Motor neuron (in vitro differentiated cells): ENCODE measurements at regions of chr19 and their contacts with region 1.

Region 1: GRCh38 chr19:771332-771785 is 20.4 kb downstream of the MISP start:
- ATAC-seq: peak in 4 of 8 experiments; percentile 33 to 79 (median 72)
- H3K4me3 ChIP-seq: no peak overlapping the region
- H3K27ac ChIP-seq: no peak overlapping the region
- H3K4me1 ChIP-seq: peaks cover 0 to 3% of the 10 kb centered on the region in 2 donors

Region 2: DNA sequence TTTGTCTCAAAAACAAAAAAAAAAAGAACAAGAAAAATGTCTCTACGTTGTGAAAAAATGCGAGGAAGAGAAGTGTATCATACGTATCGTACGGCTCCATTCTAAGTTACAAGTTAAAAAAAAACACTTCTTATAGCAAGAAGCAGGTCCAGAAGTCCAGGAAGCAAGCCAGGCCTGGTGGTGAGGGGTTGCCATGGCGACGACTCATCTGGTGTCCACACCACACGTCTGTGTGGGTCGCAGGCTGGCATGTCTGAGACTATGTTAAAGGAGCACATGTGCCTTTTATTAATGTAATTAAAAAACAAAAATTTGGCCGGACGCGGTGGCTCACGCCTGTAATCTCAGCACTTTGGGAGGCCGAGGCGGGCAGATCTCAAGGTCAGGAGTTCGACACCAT is 115.7 kb after region 1 on chr19:
- in situ Hi-C with region 1: no loop called
- ATAC-seq: peak in 3 of 8 experiments; percentile 43 to 63 (median 51)
- H3K4me3 ChIP-seq: no peak overlapping the region
- H3K27ac ChIP-seq: no peak overlapping the region
- H3K4me1 ChIP-seq: peaks cover 0 to 3% of the 10 kb centered on the region in 2 donors

Region 3: DNA sequence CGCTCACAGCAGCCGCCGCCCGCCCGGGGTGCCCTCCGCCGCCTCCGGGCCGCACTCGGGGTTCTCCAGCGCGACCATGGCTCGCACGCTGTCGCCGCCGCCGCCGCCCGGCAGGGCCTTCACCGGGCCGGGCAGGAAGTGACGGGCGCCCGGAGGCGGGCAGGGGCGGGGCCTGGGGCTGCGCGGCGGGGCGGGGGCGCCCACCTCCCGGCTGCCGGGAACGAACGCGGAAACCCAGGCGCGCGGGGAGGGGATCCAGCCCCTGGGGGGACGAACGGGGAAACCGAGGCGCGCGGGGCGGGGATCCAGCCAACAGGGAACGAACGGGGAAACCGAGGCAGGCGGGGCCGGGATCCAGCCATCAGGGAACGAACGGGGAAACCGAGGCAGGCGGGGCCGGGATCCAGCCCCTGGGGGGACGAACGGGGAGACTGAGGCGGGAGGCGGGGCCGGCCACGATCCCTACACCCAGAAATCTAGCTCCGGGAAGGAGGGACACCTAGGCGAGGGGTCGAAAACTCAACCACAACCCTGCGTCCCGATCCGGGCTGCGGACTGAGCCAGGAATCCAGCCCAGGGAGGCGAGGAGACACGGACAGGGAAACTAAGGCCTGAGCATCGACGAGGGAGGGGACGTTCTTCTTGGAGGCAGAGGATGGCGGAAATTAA is 141.9 kb after region 1 on chr19 and contains the start of gene R3HDM4:
- in situ Hi-C with region 1: loop called in 2 of 9 experiments (anchors 10 to 25 kb)
- ATAC-seq: peak; percentile 31 to 92 (median 58)
- H3K4me3 ChIP-seq: peak within 1 kb of the TSS; percentile 56 to 98 (median 92)
- H3K27ac ChIP-seq: peak within 1 kb of the TSS; percentile 66 to 68
- H3K4me1 ChIP-seq: peaks cover 6 to 13% of the 10 kb centered on the region in 2 donors
- total RNA-seq, gene R3HDM4: 25.7 to 35.6 (median 30.1) TPM